ENCODE measurements at regions of chr1 and their contacts with region 1.

Region 1: DNA sequence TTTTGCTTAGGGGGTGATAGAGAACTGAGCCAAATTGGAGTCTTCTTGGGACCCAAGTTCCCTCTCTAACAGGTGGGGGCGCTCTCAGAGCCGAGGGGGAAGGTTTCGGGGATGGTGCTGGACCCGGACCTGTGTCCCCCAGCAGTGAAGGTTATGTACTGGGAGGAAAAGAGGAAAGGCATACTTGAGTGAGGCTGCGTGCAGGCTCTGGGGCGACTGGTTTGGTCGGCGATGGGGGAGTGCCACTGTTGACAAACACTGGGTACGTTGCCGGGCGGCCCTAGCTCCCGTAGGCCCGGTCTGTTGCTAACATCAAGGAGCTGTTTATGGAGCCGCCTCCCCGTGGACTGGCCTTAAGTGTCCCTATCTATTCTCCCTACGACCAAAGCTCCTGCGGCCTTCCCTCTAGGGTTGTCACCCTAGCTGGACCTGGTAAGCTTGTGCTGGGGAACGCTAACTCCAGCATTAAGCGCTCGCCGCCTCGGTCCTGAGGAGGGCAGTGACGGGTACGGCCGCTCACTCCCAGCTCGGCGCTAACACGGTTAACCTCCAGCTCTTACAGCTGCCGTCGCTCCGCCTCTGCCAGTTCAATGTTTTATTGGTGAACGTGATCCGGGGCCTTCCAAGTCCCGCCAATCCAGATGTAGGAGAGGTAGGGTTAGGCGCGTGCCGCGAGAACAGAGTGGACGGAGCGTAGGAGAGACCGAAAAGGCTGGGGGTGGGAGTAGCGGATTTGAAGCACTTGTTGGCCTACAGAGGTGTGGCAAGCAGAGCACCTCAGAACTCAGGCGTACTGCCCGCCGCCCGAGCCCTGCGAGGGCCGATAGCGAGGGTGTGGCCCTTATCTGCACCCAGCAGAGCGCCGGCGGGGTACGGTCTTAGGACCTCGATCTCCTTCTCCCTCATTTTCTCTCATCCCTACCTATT is at the start of gene PPOX:
- DNase-seq: peak; percentile 87
- ATAC-seq: peak; percentile 95
- H3K4me3 Mint-ChIP-seq: peak within 1 kb of the TSS; percentile 92
- H3K27ac Mint-ChIP-seq: peak within 1 kb of the TSS; percentile 97
- H3K4me1 Mint-ChIP-seq: peaks cover 30% of the 10 kb centered on the region
- H3K27me3 Mint-ChIP-seq: no peaks in the 10 kb centered on the region
- total RNA-seq, gene PPOX: 47.0 to 53.0 TPM

Region 2: GRCh38 chr1:161153679-161154426 is 12.2 kb before region 1 on chr1 and contains the start of gene UFC1:
- POLR2A ChIA-PET with region 1: interaction called, 37 read pairs
- DNase-seq: peak; percentile 80
- ATAC-seq: peak; percentile 95
- H3K4me3 Mint-ChIP-seq: peak within 1 kb of the TSS; percentile 99
- H3K27ac Mint-ChIP-seq: peak within 1 kb of the TSS; percentile 100
- H3K4me1 Mint-ChIP-seq: peaks cover 20% of the 10 kb centered on the region
- H3K27me3 Mint-ChIP-seq: no peaks in the 10 kb centered on the region
- total RNA-seq, gene UFC1: 95.9 to 98.1 TPM

Region 3: GRCh38 chr1:161177112-161177935 is 11.3 kb after region 1 on chr1 and contains the start of gene B4GALT3:
- POLR2A ChIA-PET with region 1: interaction called, 37 read pairs
- DNase-seq: peak; percentile 100
- ATAC-seq: peak; percentile 86
- H3K4me3 Mint-ChIP-seq: peak within 1 kb of the TSS; percentile 99
- H3K27ac Mint-ChIP-seq: peak within 1 kb of the TSS; percentile 98
- H3K4me1 Mint-ChIP-seq: peaks cover 49% of the 10 kb centered on the region
- H3K27me3 Mint-ChIP-seq: no peaks in the 10 kb centered on the region
- total RNA-seq, gene B4GALT3: 54.5 to 54.8 TPM

Region 4: DNA sequence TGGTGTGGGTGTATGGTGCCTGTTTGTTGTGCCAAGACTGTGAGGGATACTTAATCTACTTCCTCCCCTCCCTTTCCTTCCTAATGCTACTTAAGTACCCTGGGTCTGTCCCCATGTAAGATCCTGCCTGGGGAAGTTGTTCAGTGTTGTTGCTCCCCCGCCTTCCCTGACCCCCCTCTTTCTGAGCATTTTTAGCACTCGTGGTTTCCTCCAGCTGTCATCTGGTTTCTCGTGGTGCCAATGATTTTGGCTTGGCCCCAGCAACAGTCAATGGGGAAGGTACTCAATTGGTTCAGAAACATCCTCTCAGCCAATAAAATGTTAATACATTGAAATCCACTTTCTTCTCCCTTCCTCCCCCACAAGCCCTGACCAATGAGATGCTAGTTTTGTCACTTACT is 19.3 kb after region 1 on chr1:
- POLR2A ChIA-PET with region 1: interaction called, 34 read pairs
- DNase-seq: peak; percentile 63
- ATAC-seq: peak; percentile 81
- H3K4me3 Mint-ChIP-seq: peak overlapping the region; percentile 72
- H3K27ac Mint-ChIP-seq: peak overlapping the region; percentile 97
- H3K4me1 Mint-ChIP-seq: peaks cover 64% of the 10 kb centered on the region
- H3K27me3 Mint-ChIP-seq: no peaks in the 10 kb centered on the region

Measured in activated naive CD8-positive, alpha-beta T cell treated with anti-CD3 and anti-CD28 coated beads, Interleukin-2, amount 10 ng/mL, durations not matched to agents 7 days and 5 days (primary cell).